Tibial artery (tissue), 4 donors: ENCODE measurements at regions of chr17 and their contacts with region 1.

Region 1: DNA sequence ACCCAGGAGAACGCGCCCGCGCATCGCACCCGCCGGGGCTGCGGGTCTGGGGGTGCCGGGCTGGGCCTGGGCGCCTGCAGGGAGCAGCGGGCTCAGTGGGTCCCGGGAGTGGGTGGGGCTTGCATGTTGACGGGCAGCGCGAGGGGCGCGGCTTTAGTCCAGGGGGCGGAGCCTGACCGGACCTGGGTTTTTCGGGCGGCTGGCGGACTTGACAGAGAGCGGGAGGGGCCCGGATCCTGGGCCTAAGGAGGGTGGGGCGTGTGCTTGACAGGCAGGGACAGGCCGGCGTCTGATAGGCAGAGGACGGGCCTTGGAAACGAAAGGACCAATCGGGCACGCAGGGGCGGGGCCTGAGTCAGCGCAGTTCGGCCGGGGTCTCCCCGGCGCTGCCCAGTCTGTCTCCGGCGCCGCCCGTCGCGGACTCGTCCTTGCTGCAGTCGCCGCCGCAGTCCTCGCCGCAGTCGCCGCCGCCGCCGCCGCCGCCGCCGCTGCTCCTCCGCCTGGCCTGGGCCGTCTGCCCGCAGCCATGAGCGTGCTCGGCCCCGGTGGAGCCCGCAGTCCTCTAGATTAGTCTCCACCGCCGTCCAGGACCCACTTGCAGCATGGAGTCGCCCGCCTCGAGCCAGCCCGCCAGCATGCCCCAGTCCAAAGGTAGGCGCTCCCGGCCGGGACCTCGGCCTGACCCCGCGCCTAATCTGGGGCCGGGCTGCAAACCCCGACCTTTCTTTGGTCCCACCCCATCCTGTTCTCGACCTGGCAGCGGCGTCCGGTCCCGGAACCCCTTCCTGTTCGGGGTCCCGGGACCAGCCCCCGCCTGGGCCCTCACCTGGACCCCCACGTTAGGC is at the start of gene MAP2K3:
- DNase-seq: peak; percentile 99 to 100
- H3K4me3 ChIP-seq: peak within 1 kb of the TSS; percentile 63 to 97
- H3K27ac ChIP-seq: peak within 1 kb of the TSS; percentile 86 to 97
- H3K4me1 ChIP-seq: peaks cover 4 to 76% (median 60%) of the 10 kb centered on the region in 4 donors
- H3K27me3 ChIP-seq: no peaks in the 10 kb centered on the region
- CTCF ChIP-seq: peak in 1 of 2 experiments; percentile 3

Region 2: GRCh38 chr17:21043286-21044232 is 241.0 kb before region 1 on chr17:
- intact Hi-C with region 1: loop called (anchors 10 kb)
- DNase-seq: peak; percentile 98 to 99
- H3K4me3 ChIP-seq: peak overlapping the region; percentile 99 to 100
- H3K27ac ChIP-seq: peak overlapping the region; percentile 80 to 100
- H3K4me1 ChIP-seq: peaks cover 0 to 31% (median 24%) of the 10 kb centered on the region in 4 donors
- H3K27me3 ChIP-seq: no peaks in the 10 kb centered on the region
- CTCF ChIP-seq: peak; percentile 84 to 90

Region 3: DNA sequence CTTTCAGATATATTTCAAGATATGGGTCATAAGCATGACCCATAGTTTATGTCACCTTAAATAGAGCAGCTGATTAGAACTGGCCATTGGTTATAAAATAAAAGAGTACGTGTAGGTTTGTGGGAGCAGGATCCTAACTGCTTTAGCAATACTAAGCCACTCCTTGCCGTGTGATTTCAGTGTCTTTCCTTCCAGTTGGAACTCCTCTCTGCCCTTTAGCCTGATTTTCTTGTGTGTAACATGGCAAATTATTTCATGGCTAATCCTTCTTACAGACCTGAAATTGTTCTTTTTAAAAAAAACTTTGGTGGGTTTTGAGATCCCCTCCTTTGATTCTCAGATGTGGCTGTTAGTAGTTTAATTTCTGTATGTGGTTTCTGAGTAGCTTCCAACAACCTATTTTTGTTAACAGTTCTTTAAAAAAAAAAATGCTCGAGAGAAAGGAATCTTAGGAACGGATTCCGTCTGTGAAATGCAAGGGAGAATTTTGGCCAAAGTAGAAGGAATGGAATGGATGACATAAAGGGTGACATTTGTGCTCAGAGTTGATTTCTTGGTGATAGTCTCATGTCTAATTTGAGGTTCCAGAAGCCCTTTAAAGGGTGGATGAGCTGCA is 117.8 kb before region 1 on chr17:
- intact Hi-C with region 1: loop called (anchors 5 kb)
- DNase-seq: no peak
- H3K4me3 ChIP-seq: no peak overlapping the region
- H3K27ac ChIP-seq: peak overlapping the region; percentile 88 to 89
- H3K4me1 ChIP-seq: peaks cover 0 to 94% (median 70%) of the 10 kb centered on the region in 4 donors
- H3K27me3 ChIP-seq: no peaks in the 10 kb centered on the region
- CTCF ChIP-seq: no peak

Region 4: GRCh38 chr17:21239680-21240368 is 44.7 kb before region 1 on chr17:
- intact Hi-C with region 1: no loop called
- DNase-seq: no peak
- H3K4me3 ChIP-seq: no peak overlapping the region
- H3K27ac ChIP-seq: no peak overlapping the region
- H3K4me1 ChIP-seq: peaks cover 0 to 37% (median 11%) of the 10 kb centered on the region in 4 donors
- H3K27me3 ChIP-seq: no peaks in the 10 kb centered on the region
- CTCF ChIP-seq: peak; percentile 35 to 40

Region 5: GRCh38 chr17:21345236-21345635 is 60.7 kb after region 1 on chr17:
- intact Hi-C with region 1: no loop called
- DNase-seq: peak in 1 of 2 donors; percentile 62
- H3K4me3 ChIP-seq: no peak overlapping the region
- H3K27ac ChIP-seq: no peak overlapping the region
- H3K4me1 ChIP-seq: peaks cover 0 to 6% (median 0%) of the 10 kb centered on the region in 4 donors
- H3K27me3 ChIP-seq: no peaks in the 10 kb centered on the region
- CTCF ChIP-seq: no peak

Region 6: DNA sequence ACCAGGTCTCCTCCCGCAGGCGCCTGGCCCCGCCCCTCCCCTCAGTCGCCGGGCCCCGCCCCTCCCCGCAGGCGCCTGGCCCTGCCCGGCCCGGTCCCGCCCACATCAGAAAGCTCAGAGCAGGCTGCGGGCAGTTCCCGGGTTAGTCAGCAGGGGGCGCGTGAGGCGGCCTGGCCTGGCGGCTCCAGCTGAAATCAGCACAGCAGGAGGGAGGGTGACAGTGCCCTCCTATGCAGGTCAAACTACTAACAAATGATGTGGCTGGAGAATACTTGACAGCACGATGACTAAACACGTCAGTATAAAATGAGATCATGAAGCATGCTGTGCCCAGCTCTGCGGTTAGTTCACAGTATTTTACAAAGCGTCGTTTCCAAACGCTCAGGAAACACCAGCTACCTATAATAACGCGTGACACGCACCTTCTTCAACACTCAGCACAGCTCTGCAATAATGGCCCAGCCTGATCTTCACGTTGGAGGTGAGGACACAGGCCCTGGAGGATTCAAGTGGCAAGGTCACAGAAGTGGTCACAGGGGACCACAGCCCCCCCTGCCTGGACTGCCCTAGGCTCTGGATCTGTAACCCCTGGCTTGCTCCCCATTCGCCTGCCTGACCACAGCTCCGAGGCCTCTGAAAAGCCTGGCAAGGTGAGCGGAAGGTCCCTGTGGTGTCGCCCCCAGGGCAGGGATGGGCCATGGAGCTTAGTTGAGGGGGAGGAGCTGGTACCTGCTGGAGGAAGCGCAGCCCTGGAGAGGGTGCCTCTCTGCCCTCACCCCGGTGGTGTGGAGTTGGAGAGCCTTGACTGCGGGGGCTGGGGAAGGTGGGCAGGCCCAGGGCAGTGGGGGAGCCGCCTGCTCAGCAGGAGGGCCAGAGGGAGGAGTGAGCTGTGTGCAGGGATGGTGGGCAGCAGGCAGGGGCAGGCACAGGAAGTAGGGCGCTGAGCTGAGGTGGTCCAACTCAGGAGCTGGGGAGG is 172.8 kb after region 1 on chr17:
- intact Hi-C with region 1: loop called (anchors 10 kb)
- DNase-seq: peak; percentile 77 to 91
- H3K4me3 ChIP-seq: no peak overlapping the region
- H3K27ac ChIP-seq: peak overlapping the region in 1 of 2 donors; percentile 13
- H3K4me1 ChIP-seq: peaks cover 0 to 25% (median 16%) of the 10 kb centered on the region in 4 donors
- H3K27me3 ChIP-seq: peaks cover 0 to 3% of the 10 kb centered on the region in 2 donors
- CTCF ChIP-seq: peak; percentile 84 to 97